Calu3 (cell line): ENCODE measurements at regions of chr4 and their contacts with region 1.

Region 1: GRCh38 chr4:121096629-121097028 is 24.3 kb upstream of the NDNF start:
- DNase-seq: no peak
- H3K4me3 Mint-ChIP-seq: no peak overlapping the region
- H3K27ac Mint-ChIP-seq: no peak overlapping the region
- H3K4me1 Mint-ChIP-seq: no peaks in the 10 kb centered on the region
- H3K27me3 Mint-ChIP-seq: no peaks in the 10 kb centered on the region
- CTCF ChIP-seq: peak; percentile 17

Region 2: DNA sequence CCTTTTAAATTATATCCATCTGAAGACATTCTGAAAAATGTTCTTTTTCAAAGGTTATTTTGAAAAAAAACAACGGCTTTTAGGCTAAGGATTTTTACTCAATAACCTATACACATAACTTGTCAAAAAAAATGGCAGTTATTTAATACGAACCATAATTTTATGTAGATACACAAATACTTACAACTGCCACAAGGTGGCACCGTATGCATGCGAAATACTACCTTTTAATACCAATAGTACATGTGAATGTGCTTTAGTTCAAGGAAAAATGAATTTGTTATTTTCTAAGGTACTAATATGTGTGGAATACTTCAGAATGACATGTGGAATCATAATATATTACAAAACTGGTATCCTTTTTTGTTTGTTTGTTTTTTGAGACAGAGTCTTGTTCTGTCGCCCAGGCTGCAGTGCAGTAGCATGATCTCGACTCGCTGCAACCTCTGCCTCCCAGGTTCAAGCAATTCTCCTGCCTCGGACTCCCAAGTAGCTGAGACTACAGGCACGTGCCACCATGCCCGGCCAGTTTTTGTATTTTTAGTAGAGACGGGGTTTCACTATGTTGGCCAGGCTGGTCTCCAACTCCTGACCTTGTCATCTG is 1025.3 kb before region 1 on chr4:
- CTCF ChIA-PET with region 1: no interaction called
- intact Hi-C with region 1: loop called (anchors 1 kb)
- DNase-seq: peak; percentile 38
- H3K4me3 Mint-ChIP-seq: no peak overlapping the region
- H3K27ac Mint-ChIP-seq: no peak overlapping the region
- H3K4me1 Mint-ChIP-seq: peaks cover 13% of the 10 kb centered on the region
- H3K27me3 Mint-ChIP-seq: no peaks in the 10 kb centered on the region
- CTCF ChIP-seq: peak; percentile 30

Region 3: DNA sequence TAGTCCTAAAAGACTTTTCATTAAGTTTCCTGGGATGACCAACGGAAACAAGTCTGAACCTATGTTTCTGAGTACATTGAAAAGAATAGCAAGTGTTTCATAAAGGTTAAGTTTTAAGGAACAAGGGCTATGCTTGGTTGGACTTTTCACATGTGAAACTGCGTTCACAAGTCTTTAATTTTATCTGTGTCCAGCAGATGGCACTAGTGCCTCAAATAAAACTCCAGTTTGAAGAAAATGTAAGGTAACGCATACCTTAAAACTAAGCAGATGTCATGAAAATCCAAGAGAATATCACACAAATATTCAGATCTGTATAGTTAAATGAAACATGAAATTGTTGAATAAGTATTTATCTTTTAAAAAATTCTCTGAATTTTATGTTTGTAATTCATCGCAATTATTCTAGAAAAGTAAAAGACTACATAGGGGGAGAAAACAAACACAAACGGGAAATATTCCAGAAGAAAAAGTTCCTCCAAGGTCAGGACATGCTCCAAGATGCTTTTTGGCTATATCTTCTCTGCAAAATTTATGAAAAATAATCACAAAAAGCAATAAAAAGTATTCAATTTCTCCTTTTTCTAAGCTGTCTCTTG is 940.4 kb before region 1 on chr4:
- CTCF ChIA-PET with region 1: no interaction called
- intact Hi-C with region 1: loop called (anchors 1 kb)
- DNase-seq: peak; percentile 43
- H3K4me3 Mint-ChIP-seq: no peak overlapping the region
- H3K27ac Mint-ChIP-seq: no peak overlapping the region
- H3K4me1 Mint-ChIP-seq: no peaks in the 10 kb centered on the region
- H3K27me3 Mint-ChIP-seq: no peaks in the 10 kb centered on the region
- CTCF ChIP-seq: no peak

Region 4: DNA sequence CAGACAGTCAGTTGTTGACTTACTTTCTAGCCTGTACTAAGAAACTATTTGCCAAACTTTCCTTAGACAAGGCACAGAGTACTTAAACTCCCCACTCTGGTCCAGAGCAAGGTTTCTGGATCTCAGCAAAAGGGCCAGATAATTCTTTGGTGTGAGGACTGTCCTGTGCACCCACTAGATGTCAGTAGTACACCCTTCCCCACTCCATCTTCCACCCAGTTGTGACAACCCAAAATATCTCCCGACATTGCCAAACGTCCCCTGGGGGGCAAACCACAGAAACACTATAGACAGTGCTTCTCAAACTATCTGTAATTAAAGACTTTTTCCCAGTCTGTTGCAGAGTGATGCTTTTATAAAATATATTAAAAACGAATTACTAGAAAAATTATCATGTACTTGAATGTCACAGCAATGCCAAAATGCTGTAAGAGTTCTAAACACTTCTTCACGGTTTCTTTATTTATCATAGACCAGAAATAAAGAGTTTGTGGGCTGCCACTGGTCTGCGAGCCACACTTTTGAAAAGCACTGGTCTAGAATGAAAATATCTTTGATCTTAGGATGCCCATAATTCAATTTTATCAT is 377.6 kb before region 1 on chr4:
- CTCF ChIA-PET with region 1: no interaction called
- intact Hi-C with region 1: loop called (anchors 1 kb)
- DNase-seq: peak; percentile 33
- H3K4me3 Mint-ChIP-seq: no peak overlapping the region
- H3K27ac Mint-ChIP-seq: no peak overlapping the region
- H3K4me1 Mint-ChIP-seq: no peaks in the 10 kb centered on the region
- H3K27me3 Mint-ChIP-seq: no peaks in the 10 kb centered on the region
- CTCF ChIP-seq: peak; percentile 37

Region 5: DNA sequence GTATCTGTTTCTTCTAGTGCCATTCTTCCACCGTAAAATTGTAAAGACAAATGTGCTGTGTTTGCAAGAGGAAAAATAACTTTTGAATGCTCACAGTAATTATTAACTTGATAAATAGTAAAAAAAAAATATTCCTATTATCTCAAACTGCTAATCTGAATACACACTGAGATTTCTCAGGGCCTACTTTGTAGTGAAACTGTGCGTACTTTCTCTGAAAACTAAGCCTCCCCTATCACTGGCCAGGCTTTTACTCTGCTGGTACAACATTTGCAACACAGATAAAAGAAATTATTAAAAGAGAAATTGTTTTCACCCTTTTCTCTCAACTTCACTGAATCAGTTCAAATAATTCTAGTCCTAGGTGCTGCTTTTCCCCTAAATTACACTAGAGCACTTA is 311.4 kb before region 1 on chr4:
- CTCF ChIA-PET with region 1: no interaction called
- intact Hi-C with region 1: no loop called
- DNase-seq: no peak
- H3K4me3 Mint-ChIP-seq: no peak overlapping the region
- H3K27ac Mint-ChIP-seq: no peak overlapping the region
- H3K4me1 Mint-ChIP-seq: no peaks in the 10 kb centered on the region
- H3K27me3 Mint-ChIP-seq: no peaks in the 10 kb centered on the region
- CTCF ChIP-seq: no peak

Region 6: DNA sequence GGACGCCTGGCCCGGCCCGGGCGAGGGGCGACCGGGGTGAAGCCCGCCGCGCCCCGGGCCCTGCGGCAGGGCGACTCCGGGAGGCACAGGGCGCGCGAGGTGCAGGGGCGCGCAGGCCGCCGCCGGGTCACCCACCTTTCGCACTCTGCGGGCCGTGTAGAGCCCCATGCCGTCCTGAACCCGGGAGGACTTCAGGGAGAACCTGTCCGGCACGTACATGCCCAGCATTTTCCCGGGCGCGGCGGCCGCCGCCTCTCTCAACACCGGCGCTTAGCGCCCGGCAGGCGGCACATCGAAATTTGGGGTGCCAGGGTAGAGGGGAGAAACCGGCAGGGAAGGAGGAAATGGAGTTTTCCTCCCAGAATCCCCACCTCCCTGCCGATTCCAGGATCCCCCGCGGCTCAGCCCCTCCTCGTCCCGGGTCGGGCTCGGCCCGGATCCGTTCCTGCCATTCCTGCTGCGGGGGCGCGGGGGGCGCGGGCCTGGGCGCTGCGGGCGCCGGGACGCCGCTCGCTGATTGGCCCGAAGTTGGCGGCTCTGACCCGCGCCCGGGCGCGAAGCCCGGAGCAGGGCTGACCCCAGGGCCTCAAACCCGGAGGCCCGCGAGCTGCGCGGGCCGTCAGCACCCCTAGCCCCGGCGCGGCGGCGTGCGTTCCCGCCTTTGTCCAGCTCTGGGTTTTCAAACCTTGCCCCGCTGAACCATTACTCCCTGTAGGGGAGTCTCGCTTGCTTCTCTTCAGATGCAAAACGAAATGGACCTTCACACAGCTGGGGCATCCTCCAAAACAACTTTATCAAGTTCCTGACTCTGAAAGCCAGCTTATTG is 174.0 kb before region 1 on chr4 and contains the start of gene PRDM5:
- CTCF ChIA-PET with region 1: no interaction called
- intact Hi-C with region 1: loop called (anchors 1 kb)
- DNase-seq: peak; percentile 51
- H3K4me3 Mint-ChIP-seq: peak within 1 kb of the TSS; percentile 85
- H3K27ac Mint-ChIP-seq: peak within 1 kb of the TSS; percentile 62
- H3K4me1 Mint-ChIP-seq: no peaks in the 10 kb centered on the region
- H3K27me3 Mint-ChIP-seq: no peaks in the 10 kb centered on the region
- CTCF ChIP-seq: no peak
- total RNA-seq, gene PRDM5: 8.3 and 8.7 TPM in 2 replicates

Region 7: DNA sequence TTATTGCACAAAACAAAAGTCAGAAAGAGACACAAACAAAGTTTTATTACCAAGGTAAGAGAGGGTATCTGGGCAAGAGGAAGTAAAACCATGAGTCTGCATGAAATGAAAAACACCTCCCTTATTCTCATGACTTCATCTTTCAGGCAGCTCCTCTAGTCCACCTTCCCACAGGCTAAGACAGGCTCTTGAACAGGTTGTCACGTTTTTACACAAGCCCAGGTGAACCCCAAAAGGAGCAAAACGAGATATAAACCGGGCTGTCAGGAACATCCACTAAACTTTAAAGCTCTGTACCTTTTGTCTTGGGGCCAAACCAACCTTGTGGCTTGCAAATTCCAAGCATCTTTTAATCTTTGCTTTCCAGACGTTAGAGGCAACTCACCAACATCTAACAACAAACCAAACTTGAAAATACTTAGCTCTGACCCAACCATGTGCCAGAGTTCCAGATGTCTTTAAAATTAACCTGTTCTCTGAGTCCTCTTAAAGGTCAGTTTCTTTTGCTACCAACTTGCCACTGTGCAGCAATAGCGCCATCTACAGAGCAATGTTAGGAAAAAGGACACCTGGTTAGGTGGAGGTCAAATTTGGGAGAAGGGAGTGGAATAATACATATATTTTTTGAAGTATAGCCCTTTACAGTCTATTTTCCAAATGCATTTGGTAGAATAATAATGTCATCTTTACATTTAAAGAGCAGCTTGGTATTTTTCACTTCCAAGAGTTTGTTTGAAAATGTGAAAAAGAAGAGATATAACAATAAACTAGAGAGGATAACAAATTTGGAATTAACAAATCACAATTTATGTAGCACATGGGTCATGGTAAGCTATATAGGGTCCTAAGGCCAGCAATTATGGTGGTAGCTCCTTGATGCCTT is 211.1 kb after region 1 on chr4:
- CTCF ChIA-PET with region 1: no interaction called
- intact Hi-C with region 1: loop called (anchors 10 kb)
- DNase-seq: peak; percentile 41
- H3K4me3 Mint-ChIP-seq: no peak overlapping the region
- H3K27ac Mint-ChIP-seq: no peak overlapping the region
- H3K4me1 Mint-ChIP-seq: peaks cover 10% of the 10 kb centered on the region
- H3K27me3 Mint-ChIP-seq: no peaks in the 10 kb centered on the region
- CTCF ChIP-seq: peak; percentile 53

Region 8: DNA sequence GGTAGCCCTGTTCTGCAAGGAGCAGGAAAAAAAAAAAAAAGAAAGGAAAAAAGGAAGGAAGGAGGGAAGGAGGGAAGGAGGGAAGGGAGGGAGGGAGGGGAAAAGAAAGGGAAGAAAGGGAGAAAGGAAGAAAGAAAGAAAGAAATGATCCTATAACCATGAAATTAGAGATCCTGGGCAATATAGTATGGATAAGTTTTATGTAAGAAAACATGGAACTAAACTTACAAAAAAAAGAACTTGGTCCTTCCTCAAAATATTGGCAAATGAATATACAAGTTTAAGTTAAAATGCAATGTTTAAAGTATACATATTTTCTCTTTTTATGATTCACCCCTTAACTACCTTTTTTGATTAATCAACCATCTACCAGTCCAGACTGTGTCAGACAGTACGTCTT is 754.7 kb after region 1 on chr4:
- CTCF ChIA-PET with region 1: no interaction called
- intact Hi-C with region 1: no loop called
- DNase-seq: no peak
- H3K4me3 Mint-ChIP-seq: no peak overlapping the region
- H3K27ac Mint-ChIP-seq: no peak overlapping the region
- H3K4me1 Mint-ChIP-seq: no peaks in the 10 kb centered on the region
- H3K27me3 Mint-ChIP-seq: no peaks in the 10 kb centered on the region
- CTCF ChIP-seq: no peak